ENCODE measurements at regions of chr14 and their contacts with region 1.

Region 1: GRCh38 chr14:50003213-50004031 is 110.5 kb downstream of the ARF6 start:
- H3K4me3 Mint-ChIP-seq: peak overlapping the region; percentile 82
- H3K27ac Mint-ChIP-seq: peak overlapping the region; percentile 98
- H3K4me1 Mint-ChIP-seq: peaks cover 68% of the 10 kb centered on the region
- H3K27me3 Mint-ChIP-seq: no peaks in the 10 kb centered on the region

Region 2: DNA sequence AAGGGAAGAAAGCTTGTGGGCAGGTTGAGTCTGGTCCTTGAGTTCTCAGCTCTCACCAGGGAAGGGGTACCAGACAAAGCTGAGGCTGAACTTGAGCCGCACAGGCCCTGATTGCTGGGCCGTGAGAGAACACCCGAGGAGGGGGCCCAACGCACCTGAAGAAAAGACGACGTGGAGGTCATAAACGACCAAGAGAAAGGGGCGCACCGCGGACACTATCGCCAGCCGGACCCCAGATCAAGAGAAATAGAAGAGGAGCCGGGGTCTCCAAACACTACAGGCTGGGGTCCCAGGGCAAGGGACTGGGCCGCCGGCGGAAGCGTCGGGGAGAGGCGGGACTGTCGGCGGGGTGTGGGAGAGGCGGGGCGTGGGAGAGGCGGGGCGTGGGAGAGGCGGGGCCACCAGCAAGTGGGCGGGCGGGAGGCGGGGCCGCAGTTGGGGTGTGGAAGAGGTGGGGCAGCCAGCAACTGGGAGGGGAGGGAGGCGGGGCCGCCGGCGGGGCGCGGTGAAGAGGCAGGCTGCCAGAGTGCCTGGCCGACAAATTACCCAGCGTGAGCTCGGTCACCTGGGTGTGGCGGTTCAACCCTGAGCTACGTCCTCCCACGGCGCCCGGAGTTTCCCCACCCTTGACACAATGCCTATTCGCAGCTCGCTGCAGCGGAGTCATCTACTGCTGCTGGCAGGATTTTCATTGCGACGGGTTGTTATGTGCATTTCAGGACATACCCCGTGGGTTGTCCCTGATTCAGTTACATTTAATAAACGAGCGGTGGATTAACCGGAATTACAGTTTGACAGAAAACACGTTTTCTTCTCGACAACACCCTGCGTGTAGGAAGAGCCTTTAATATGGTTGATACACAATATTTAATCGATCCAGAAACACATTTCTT is 135.3 kb before region 1 on chr14:
- intact Hi-C with region 1: loop called (anchors 1 kb)
- H3K4me3 Mint-ChIP-seq: peak overlapping the region; percentile 93
- H3K27ac Mint-ChIP-seq: peak overlapping the region; percentile 98
- H3K4me1 Mint-ChIP-seq: peaks cover 29% of the 10 kb centered on the region
- H3K27me3 Mint-ChIP-seq: no peaks in the 10 kb centered on the region

Region 3: GRCh38 chr14:49971156-49972130 is 32.0 kb before region 1 on chr14:
- intact Hi-C with region 1: loop called (anchors 2 kb)
- H3K4me3 Mint-ChIP-seq: peak overlapping the region; percentile 52
- H3K27ac Mint-ChIP-seq: peak overlapping the region; percentile 96
- H3K4me1 Mint-ChIP-seq: peaks cover 64% of the 10 kb centered on the region
- H3K27me3 Mint-ChIP-seq: no peaks in the 10 kb centered on the region

Region 4: GRCh38 chr14:50038398-50039119 is 35.1 kb after region 1 on chr14:
- intact Hi-C with region 1: loop called (anchors 1 kb)
- H3K4me3 Mint-ChIP-seq: peak overlapping the region; percentile 26
- H3K27ac Mint-ChIP-seq: peak overlapping the region; percentile 98
- H3K4me1 Mint-ChIP-seq: peaks cover 68% of the 10 kb centered on the region
- H3K27me3 Mint-ChIP-seq: no peaks in the 10 kb centered on the region

Region 5: GRCh38 chr14:50060871-50061663 is 57.6 kb after region 1 on chr14:
- intact Hi-C with region 1: loop called (anchors 10 kb)
- H3K4me3 Mint-ChIP-seq: no peak overlapping the region
- H3K27ac Mint-ChIP-seq: peak overlapping the region; percentile 85
- H3K4me1 Mint-ChIP-seq: peaks cover 91% of the 10 kb centered on the region
- H3K27me3 Mint-ChIP-seq: no peaks in the 10 kb centered on the region

Region 6: GRCh38 chr14:50109342-50109741 is 105.9 kb after region 1 on chr14:
- intact Hi-C with region 1: loop called (anchors 2 kb)
- H3K4me3 Mint-ChIP-seq: no peak overlapping the region
- H3K27ac Mint-ChIP-seq: no peak overlapping the region
- H3K4me1 Mint-ChIP-seq: no peaks in the 10 kb centered on the region
- H3K27me3 Mint-ChIP-seq: no peaks in the 10 kb centered on the region

Measured in dendritic cell treated with granulocyte-macrophage colony-stimulating factor and Interleukin-4, amounts not matched to agents 40 ng/mL and 50 ng/mL, for 4 days (primary cell).